Prostate gland (tissue), 2 donors: ENCODE measurements at regions of chr17 and their contacts with region 1.

Region 1: DNA sequence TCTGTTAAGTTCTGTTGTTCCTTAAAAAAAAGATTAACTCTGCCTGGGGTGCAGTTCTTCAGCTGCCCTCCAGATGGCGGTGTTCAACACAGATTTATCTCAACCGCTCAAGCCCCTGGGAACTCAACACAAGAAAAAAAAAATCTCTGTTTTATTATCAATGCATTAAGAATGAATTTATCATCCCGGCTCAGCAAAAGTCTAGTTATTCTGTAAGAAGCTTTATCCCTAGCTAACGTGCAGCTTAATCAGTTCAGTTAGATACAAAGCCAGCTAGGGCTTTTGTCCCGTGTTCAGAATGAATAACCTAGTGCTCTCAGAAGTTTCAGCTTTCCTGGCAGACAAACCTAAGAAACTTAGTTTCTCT is 475.9 kb upstream of the CCL2 start:
- DNase-seq: peak; percentile 31
- H3K4me3 ChIP-seq: no peak overlapping the region
- H3K27ac ChIP-seq: no peak overlapping the region
- H3K4me1 ChIP-seq: no peaks in the 10 kb centered on the region
- H3K27me3 ChIP-seq: peaks cover 4% of the 10 kb centered on the region
- CTCF ChIP-seq: peak; percentile 83 to 93 (median 92)
- POLR2A ChIP-seq: no peak

Region 2: DNA sequence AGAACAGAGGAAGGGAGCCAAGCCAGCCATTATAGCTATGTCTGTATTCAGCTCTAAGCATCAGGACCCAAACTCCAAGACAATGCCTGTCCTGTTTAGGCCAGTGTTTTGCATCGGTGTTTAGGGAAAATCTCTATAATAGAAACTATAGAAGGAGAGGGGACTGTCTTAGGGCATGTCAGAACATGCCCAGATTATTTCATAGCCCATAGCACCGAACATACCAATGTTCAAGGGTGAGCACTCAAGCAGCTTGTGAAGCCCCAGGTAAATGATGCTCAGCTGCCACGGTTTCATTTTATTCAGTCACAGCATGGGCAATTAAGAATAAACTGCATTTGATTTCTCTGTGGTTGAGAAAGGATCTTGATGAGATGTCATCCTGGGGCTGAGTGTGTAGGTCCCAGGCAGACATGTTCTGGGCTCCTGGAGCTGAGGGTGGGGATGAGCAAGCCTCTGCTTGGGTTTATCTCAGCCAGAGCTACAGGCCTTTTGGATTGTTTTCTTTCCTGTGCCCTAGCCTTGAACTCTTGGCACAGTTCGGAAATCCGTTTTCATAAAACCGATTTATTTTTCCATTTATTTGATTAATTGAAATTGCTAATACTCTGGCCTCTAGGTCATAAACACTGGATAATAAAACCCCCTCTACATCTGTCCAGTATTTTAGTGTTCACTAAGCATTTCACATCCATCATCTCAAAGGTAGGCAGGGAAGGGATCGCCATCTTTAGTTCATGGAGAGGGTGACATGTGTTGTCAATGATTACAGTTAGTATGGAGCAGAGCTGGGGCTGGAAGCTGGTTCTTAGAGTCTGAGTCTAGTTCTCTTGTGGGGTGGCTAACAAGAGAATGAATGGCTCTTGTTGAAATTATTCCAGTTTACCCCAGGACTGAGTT is 195.4 kb before region 1 on chr17:
- intact Hi-C with region 1: no loop called
- DNase-seq: no peak
- H3K4me3 ChIP-seq: no peak overlapping the region
- H3K27ac ChIP-seq: no peak overlapping the region
- H3K4me1 ChIP-seq: no peaks in the 10 kb centered on the region
- H3K27me3 ChIP-seq: no peaks in the 10 kb centered on the region
- CTCF ChIP-seq: no peak
- POLR2A ChIP-seq: no peak

Region 3: DNA sequence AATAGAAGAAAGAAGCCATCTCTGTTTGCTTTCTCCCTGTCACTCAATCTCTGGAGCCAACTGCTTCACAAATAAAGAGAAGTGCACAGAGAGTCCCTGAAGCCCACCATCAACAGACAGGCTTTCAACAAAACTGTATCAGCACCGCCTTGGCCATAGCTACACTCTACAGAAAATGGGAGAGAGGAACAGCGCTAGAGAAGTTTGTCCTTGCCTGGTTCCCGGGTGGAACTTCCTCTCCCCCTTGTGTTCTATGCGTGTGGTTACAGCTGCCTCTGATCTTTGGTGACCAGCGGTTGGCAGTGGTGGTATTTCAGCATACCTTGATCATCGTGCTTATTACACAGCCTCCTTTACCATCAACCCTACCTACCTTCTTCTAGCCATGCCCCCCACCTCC is 384.4 kb after region 1 on chr17:
- intact Hi-C with region 1: loop called (anchors 5 kb)
- DNase-seq: no peak
- H3K4me3 ChIP-seq: no peak overlapping the region
- H3K27ac ChIP-seq: no peak overlapping the region
- H3K4me1 ChIP-seq: no peaks in the 10 kb centered on the region
- H3K27me3 ChIP-seq: peaks cover 4% of the 10 kb centered on the region
- CTCF ChIP-seq: peak in 2 of 4 experiments; percentile 25 to 29
- POLR2A ChIP-seq: no peak